ENCODE measurements at regions of chr7 and their contacts with region 1.

Region 1: DNA sequence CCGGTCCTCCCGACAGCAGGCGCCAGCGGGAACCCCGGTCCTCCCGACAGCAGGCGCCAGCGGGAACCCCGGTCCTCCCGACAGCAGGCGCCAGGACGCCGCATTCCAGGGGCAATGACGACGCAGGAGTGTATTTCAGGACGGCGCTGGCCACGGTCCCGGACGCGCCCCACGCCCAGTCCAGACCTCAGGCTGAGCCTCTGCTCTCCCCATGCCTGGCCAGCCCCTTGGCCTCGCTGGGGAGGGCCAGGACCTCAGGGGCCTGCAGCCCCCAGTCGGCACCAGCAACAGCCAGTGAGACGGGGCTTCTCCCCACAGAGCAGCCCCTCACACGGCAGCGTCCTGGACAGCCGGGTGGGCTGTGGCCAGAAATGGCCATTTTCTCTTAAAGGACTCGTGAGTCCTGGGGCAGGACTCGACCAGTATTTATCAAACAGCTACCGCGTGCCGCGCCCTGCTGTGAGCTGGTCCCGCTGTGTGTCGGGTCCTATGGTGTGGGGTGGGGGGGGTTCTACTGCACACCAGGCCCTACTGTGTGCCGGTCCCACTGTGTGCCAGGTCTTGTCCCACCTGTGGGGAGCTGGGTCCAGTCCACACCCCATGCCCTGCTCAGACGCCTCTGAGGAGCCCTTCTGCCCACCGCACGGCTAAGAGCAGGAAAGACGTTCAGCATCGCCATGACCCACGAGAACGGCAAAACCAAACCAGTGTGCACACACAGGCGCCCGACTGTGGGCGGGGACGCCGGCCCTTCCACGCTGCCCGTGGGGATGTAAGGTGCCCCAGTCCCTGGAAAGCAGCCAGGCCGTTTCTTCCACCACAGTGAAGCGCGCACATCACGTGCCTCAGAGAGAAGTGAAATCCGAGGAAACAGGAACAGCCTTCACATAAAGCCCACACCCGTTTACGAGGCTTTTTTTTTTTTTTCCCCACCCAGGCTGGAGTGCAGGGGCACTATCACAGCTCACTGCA is 33.3 kb downstream of the GET4 start:
- DNase-seq: no peak
- H3K4me3 Mint-ChIP-seq: no peak overlapping the region
- H3K27ac Mint-ChIP-seq: no peak overlapping the region
- H3K4me1 Mint-ChIP-seq: peaks cover 9% of the 10 kb centered on the region
- H3K27me3 Mint-ChIP-seq: peaks cover 9% of the 10 kb centered on the region

Region 2: GRCh38 chr7:923108-924041 is 13.7 kb after region 1 on chr7:
- CTCF ChIA-PET with region 1: interaction called, 9 read pairs
- POLR2A ChIA-PET with region 1: interaction called, 16 read pairs
- DNase-seq: peak; percentile 97
- H3K4me3 Mint-ChIP-seq: peak overlapping the region; percentile 78
- H3K27ac Mint-ChIP-seq: peak overlapping the region; percentile 92
- H3K4me1 Mint-ChIP-seq: peaks cover 42% of the 10 kb centered on the region
- H3K27me3 Mint-ChIP-seq: peaks cover 16% of the 10 kb centered on the region

Measured in activated CD4-positive, alpha-beta memory T cell treated with anti-CD3 and anti-CD28 coated beads, Interleukin-2, amount 10 ng/mL, durations not matched to agents 7 days and 5 days (primary cell).